ENCODE measurements at regions of chr14 and their contacts with region 1.

Region 1: DNA sequence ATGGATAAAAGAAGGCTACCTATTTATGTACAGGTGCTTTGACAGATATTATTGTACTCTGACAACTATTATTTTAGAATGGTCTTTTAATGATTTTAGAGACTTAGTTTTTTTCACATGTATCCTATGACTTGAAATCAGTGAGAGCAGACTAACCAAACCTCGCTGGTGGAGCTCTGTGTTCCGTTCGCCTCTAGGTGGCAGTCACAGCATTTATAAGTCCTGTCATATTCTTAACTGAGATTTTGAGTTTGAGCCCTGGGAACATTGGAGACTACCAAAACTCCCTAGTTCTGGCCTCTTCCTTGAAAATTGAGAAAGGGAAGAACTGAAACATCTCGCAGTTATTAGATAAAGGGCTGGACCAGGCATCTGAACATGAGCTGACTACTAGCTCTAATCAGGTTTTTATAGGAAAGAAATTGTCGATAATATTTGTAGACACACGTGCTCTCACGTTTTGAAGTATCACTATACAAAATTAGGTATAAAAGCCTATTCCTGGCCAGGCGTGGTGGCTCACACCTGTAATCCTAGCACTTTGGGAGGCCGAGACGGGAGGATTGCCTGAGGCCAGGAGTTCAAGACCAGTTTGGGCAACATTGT is 48.3 kb downstream of the TTLL5 start:
- DNase-seq: peak; percentile 47 to 75 (median 48)
- ATAC-seq: peak; percentile 81
- H3K4me3 ChIP-seq: no peak overlapping the region
- H3K27ac ChIP-seq: no peak overlapping the region
- H3K4me1 ChIP-seq: no peaks in the 10 kb centered on the region
- H3K27me3 ChIP-seq: no peaks in the 10 kb centered on the region
- CTCF ChIP-seq: peak; percentile 58 to 74 (median 68); a peak in 5 of 6 replicates
- EP300 ChIP-seq: no peak
- POLR2A ChIP-seq: no peak
- RAD21 ChIP-seq: peak; percentile 54 to 67

Region 2: GRCh38 chr14:75794615-75795038 is 85.3 kb after region 1 on chr14:
- CTCF ChIA-PET with region 1: no interaction called
- POLR2A ChIA-PET with region 1: no interaction called
- in situ Hi-C with region 1: no loop called
- intact Hi-C with region 1: loop called (anchors 2 kb)
- DNase-seq: peak in 1 of 4 experiments; percentile 11
- ATAC-seq: peak; percentile 83
- H3K4me3 ChIP-seq: no peak overlapping the region
- H3K27ac ChIP-seq: no peak overlapping the region
- H3K4me1 ChIP-seq: no peaks in the 10 kb centered on the region
- H3K27me3 ChIP-seq: no peaks in the 10 kb centered on the region
- CTCF ChIP-seq: peak; percentile 29 to 71 (median 68); a peak in 4 of 6 replicates
- EP300 ChIP-seq: no peak
- POLR2A ChIP-seq: no peak
- RAD21 ChIP-seq: peak; percentile 56 to 72

Region 3: GRCh38 chr14:75906676-75907280 is 197.5 kb after region 1 on chr14:
- CTCF ChIA-PET with region 1: no interaction called
- POLR2A ChIA-PET with region 1: no interaction called
- in situ Hi-C with region 1: no loop called
- intact Hi-C with region 1: loop called (anchors 2 kb)
- DNase-seq: peak; percentile 45 to 73 (median 50)
- ATAC-seq: peak; percentile 70; the same call in 2 of the 3 replicates
- H3K4me3 ChIP-seq: no peak overlapping the region
- H3K27ac ChIP-seq: no peak overlapping the region
- H3K4me1 ChIP-seq: peaks cover 2 to 6% of the 10 kb centered on the region in 2 experiments; a peak in 2 of 5 replicates
- H3K27me3 ChIP-seq: no peaks in the 10 kb centered on the region
- CTCF ChIP-seq: peak; percentile 48 to 69 (median 65); a peak in 5 of 6 replicates
- EP300 ChIP-seq: no peak
- POLR2A ChIP-seq: no peak
- RAD21 ChIP-seq: peak; percentile 58 to 73

Region 4: DNA sequence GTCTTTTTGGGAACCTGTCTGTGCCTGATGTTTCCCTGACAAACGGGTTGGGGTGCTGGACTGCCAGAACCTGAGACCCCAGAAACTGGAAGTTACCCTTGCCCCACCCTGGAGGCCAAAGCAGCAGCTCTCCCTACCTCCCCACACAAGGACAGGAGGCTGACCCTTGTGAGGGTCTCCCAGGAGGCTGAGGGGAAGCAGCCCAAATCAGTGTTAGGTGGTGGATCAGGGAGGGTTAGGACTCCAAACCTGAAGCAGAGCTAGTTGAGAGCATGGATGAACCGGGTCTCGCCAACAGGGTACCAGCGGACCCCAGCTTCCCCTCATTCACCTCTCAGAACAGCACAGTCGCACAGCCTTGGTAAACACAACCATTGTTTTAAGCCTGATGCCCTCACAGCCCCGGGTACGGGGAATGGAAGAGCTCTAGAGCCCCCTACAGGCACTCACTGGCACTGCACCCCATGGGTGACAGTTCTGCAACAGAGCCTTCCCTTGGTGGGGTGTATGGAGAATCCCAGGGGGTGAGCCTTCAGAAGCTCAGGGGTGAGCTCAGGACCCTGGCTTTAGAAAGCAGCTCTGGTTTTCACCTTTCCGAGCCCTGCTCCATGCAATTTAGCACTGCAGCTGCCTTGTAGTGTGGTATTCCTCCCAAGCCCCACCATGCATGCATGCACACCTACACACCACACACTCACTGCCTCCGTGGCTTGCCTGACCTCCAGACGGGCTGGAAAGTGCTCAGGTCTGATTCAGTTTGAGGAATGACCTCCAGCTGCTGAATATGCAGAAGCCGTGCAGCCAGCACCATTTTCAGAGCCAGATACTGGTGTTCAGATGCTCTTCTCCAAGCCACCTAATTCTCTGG is 677.8 kb after region 1 on chr14:
- CTCF ChIA-PET with region 1: no interaction called
- POLR2A ChIA-PET with region 1: no interaction called
- in situ Hi-C with region 1: loop called (anchors 25 kb)
- intact Hi-C with region 1: loop called (anchors 10 kb)
- DNase-seq: peak; percentile 65 to 77 (median 76)
- ATAC-seq: peak; percentile 97
- H3K4me3 ChIP-seq: no peak overlapping the region
- H3K27ac ChIP-seq: no peak overlapping the region
- H3K4me1 ChIP-seq: no peaks in the 10 kb centered on the region; a peak in 1 of 5 replicates
- H3K27me3 ChIP-seq: no peaks in the 10 kb centered on the region
- CTCF ChIP-seq: peak; percentile 83 to 92 (median 84)
- EP300 ChIP-seq: no peak
- POLR2A ChIP-seq: no peak
- RAD21 ChIP-seq: peak; percentile 74 to 78

Region 5: GRCh38 chr14:76654573-76655090 is 945.3 kb after region 1 on chr14:
- CTCF ChIA-PET with region 1: no interaction called
- POLR2A ChIA-PET with region 1: no interaction called
- in situ Hi-C with region 1: loop called (anchors 10 kb)
- intact Hi-C with region 1: loop called (anchors 10 kb)
- DNase-seq: no peak
- ATAC-seq: no peak
- H3K4me3 ChIP-seq: no peak overlapping the region
- H3K27ac ChIP-seq: no peak overlapping the region
- H3K4me1 ChIP-seq: no peaks in the 10 kb centered on the region
- H3K27me3 ChIP-seq: peaks cover 0 to 26% of the 10 kb centered on the region in 2 experiments; a peak in 3 of 5 replicates
- CTCF ChIP-seq: no peak
- EP300 ChIP-seq: no peak
- POLR2A ChIP-seq: no peak
- RAD21 ChIP-seq: no peak